ENCODE measurements at regions of chr15 and their contacts with region 1.

Region 1: DNA sequence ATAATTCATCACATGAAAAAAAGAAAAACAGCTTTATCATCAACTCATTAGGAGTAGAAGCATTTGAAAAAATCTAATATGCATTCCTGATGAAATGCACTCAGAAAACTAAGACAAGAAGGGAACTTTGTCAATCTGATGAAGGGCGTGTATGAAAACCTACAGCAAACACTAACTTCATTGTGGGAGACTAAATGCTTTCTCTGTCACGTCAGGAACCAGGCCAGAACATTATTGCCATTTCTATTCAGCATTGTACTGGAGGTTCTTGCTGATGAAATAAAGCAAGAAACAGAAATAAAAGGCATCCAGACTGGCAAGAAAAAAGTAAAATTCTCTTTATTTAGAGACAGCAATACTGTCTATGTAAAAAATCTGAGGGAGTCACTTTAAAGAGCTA is 235.2 kb downstream of the GABRB3 start:
- DNase-seq: no peak
- H3K4me3 ChIP-seq: no peak overlapping the region
- H3K27me3 ChIP-seq: no peaks in the 10 kb centered on the region
- CTCF ChIP-seq: no peak

Region 2: GRCh38 chr15:26521691-26522198 is 15.9 kb before region 1 on chr15:
- CTCF ChIA-PET with region 1: no interaction called
- POLR2A ChIA-PET with region 1: no interaction called
- DNase-seq: no peak
- H3K4me3 ChIP-seq: no peak overlapping the region
- H3K27me3 ChIP-seq: no peaks in the 10 kb centered on the region
- CTCF ChIP-seq: no peak

Region 3: DNA sequence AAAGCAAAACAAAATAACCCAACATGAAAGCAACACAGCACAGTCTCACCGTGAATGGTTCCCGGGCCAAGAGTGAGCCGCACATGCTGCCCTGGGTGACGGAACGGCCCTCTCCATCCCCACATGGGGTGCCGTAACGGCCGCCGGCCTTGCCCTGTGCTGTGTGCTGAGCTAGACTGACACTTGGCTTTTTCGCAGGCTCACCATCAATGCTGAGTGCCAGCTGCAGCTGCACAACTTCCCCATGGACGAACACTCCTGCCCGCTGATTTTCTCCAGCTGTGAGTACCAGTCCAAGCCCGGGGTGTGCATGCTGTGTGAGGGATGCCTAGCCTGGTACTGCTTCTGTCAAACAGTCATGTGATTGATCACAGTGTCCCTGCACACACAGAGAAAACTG is 790.9 kb after region 1 on chr15:
- CTCF ChIA-PET with region 1: no interaction called
- POLR2A ChIA-PET with region 1: interaction called, 10 read pairs
- DNase-seq: no peak
- H3K4me3 ChIP-seq: no peak overlapping the region
- H3K27me3 ChIP-seq: no peaks in the 10 kb centered on the region
- CTCF ChIP-seq: no peak